Aorta (tissue), 5 donors: ENCODE measurements at regions of chr12 and their contacts with region 1.

Region 1: GRCh38 chr12:47870175-47870781 is 34.5 kb downstream of the VDR start:
- DNase-seq: peak; percentile 68 to 82
- ATAC-seq: peak; percentile 74
- H3K4me3 ChIP-seq: no peak overlapping the region
- H3K27ac ChIP-seq: no peak overlapping the region
- H3K4me1 ChIP-seq: peaks cover 0 to 1% of the 10 kb centered on the region in 2 donors
- H3K27me3 ChIP-seq: no peaks in the 10 kb centered on the region

Region 2: DNA sequence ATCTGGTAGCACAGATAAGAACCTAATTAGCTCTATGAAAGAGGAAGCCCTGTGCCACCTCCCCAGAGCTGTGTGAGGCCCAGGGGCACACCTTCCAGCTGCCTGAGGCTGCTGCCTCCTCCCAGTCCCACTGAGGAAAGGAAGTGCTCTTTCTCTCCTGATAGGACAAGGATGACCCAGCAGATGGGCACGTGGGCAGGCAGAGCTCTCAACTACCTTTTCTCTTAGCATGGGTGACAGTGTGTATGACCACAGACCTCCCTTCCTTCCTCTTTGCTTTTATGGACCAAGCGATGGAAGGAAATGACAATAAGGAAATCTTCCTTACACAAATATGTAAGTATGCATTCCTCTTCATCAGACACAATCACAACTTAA is 662.9 kb before region 1 on chr12:
- intact Hi-C with region 1: no loop called
- DNase-seq: peak in 1 of 2 donors; percentile 63
- ATAC-seq: peak; percentile 68
- H3K4me3 ChIP-seq: no peak overlapping the region
- H3K27ac ChIP-seq: no peak overlapping the region
- H3K4me1 ChIP-seq: peaks cover 0 to 2% of the 10 kb centered on the region in 2 donors
- H3K27me3 ChIP-seq: no peaks in the 10 kb centered on the region

Region 3: GRCh38 chr12:47949441-47950308 is 79.4 kb after region 1 on chr12:
- intact Hi-C with region 1: loop called in 1 of 2 experiments (anchors 5 kb)
- DNase-seq: peak; percentile 86 to 91
- ATAC-seq: peak; percentile 87
- H3K4me3 ChIP-seq: no peak overlapping the region
- H3K27ac ChIP-seq: no peak overlapping the region
- H3K4me1 ChIP-seq: no peaks in the 10 kb centered on the region
- H3K27me3 ChIP-seq: no peaks in the 10 kb centered on the region